Colonic mucosa (tissue), 4 donors: ENCODE measurements at regions of chr17 and their contacts with region 1.

Region 1: GRCh38 chr17:4565209-4566141 is 5.1 kb upstream of the GGT6 start:
- DNase-seq: peak; percentile 82
- H3K4me3 ChIP-seq: no peak overlapping the region
- H3K27ac ChIP-seq: no peak overlapping the region
- H3K4me1 ChIP-seq: peaks cover 8% of the 10 kb centered on the region
- H3K27me3 ChIP-seq: no peaks in the 10 kb centered on the region
- CTCF ChIP-seq: peak; percentile 81

Region 2: DNA sequence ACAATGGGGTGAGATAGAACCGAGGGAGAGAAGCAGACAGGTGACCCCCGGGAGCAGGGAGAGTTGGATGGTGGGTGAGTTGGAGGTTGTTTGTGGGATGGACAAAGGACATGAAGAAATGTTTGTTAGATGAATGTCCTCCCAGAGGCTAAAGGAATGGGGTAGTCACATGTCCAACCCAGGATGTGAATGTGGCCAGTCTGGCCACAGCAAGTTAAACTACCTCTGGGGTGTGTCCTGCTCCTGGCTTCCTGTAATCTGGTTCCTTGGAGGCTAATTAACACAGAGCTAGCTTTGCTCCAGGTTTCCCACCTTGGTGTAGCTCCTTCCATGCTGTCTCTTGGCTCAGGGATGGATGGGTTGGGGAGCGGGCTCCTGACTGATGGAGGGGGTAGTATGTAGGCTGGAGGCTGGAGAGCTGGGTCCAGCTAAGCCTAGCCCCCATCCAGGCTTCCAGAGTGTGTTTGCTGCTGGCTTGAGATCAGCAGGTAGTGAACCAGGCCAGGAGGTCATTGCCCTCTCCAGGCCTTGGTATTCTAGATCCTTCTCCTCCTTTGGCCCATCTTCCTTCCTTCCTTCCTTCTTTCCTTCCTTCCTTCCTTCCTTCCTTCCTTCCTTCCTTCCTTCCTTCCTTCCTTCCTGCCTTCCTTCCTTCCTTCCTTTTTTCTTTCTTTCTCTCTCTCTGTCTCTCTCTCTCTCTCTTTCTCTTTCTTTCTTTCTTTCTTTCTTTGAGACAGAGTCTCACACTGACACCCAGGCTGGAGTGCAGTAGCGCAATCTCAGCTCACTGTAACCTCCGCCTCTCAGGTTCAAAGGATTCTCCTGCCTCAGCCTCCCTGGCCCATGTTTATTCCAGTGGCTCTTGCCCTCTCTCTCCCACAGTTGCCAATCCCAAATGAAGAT is 171.0 kb before region 1 on chr17:
- intact Hi-C with region 1: no loop called
- DNase-seq: peak; percentile 35
- H3K4me3 ChIP-seq: no peak overlapping the region
- H3K27ac ChIP-seq: no peak overlapping the region
- H3K4me1 ChIP-seq: no peaks in the 10 kb centered on the region
- H3K27me3 ChIP-seq: no peaks in the 10 kb centered on the region
- CTCF ChIP-seq: no peak

Region 3: GRCh38 chr17:4625181-4625617 is 59.7 kb after region 1 on chr17:
- intact Hi-C with region 1: loop called (anchors 2 kb)
- DNase-seq: no peak
- H3K4me3 ChIP-seq: no peak overlapping the region
- H3K27ac ChIP-seq: no peak overlapping the region
- H3K4me1 ChIP-seq: no peaks in the 10 kb centered on the region
- H3K27me3 ChIP-seq: no peaks in the 10 kb centered on the region
- CTCF ChIP-seq: no peak